GM10248 (cell line): ENCODE measurements at regions of chr9 and their contacts with region 1.

Region 1: GRCh38 chr9:70392189-70392588 is 22.3 kb downstream of the KLF9 start:
- DNase-seq: no peak
- CTCF ChIP-seq: peak; percentile 1

Region 2: GRCh38 chr9:70403618-70404025 is 11.4 kb after region 1 on chr9:
- CTCF ChIA-PET with region 1: interaction called, 10 read pairs
- POLR2A ChIA-PET with region 1: no interaction called
- DNase-seq: no peak
- CTCF ChIP-seq: no peak